B cell (primary cell): ENCODE measurements at regions of chr4 and their contacts with region 1.

Region 1: DNA sequence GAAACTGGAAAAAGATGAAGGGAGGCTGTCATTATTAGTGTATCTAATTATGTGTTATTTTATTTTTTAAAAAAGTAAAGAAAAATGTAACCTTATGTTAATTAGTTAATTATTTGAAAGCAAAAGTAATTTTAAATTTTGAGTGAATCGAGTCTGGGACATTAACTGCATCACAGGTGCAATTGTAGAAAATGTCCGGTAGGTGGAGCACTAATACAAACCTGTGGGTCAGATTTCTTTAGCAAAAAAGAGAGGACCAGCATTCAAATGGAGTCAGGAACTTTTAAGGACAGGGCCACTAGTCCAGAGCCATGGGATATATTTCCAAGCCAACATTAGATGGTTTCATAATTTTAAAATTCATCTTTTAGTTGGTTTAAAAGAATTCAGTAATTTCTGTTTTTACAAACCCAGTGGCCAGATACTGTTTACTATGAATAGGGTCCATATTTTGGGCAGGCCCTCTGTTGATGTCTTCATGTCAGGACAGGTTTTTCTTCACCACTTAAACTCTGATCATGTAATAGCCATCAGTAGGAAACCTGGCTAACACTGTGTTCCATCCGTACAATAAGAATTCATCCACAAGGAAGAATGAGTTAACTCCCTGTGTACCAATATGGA is 27.2 kb downstream of the BST1 start:
- DNase-seq: peak; percentile 62
- ATAC-seq: peak; percentile 47
- H3K4me3 ChIP-seq: no peak overlapping the region
- H3K4me3 Mint-ChIP-seq: no peak overlapping the region
- H3K27ac ChIP-seq: no peak overlapping the region
- H3K27ac Mint-ChIP-seq: no peak overlapping the region
- H3K4me1 ChIP-seq: no peaks in the 10 kb centered on the region
- H3K4me1 Mint-ChIP-seq: no peaks in the 10 kb centered on the region
- H3K27me3 ChIP-seq: no peaks in the 10 kb centered on the region
- H3K27me3 Mint-ChIP-seq: peaks cover 7% of the 10 kb centered on the region
- CTCF ChIP-seq: peak; percentile 99

Region 2: DNA sequence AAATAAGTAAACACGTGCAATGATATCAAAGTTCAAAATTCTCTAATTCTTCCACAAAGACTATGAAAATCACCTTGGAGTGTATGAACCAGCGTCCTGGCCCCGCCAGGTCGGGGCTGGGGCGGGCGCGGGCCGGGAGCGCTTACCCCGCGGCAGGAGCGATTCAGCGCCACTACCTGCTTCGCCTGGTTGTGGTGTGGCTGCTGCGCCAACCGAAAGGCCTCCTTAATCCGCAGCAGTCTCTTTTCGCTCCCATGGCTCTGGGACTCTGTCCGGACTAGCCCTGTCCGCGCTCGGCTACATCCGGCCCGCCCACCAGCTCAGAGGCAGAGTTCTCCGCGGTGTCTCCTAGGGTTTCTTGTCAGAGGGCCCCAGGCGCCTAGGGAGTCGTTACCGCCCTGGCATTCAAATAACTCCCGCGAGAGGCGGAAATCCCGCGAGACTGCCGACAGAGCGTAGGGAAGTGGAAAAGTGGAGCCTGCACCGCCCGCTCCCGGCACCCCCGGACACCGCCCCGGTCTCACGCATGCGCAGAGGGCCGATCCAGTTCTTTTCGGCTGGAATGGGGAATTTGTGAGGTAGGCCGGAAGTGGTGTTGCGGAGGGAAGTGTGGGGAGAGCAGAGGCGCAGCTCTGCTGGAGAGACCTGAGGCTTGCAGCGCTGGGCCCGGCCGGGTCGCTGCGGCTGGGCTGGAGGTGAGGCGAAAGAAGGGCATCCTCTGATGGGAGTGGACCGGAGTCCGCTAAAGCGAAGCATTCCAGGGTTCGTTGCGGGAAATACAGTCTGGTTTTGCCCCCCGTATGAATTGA is 48.6 kb before region 1 on chr4 and contains the start of gene FAM200B:
- CTCF ChIA-PET with region 1: no interaction called
- POLR2A ChIA-PET with region 1: no interaction called
- intact Hi-C with region 1: loop called (anchors 1 kb)
- DNase-seq: peak; percentile 96
- ATAC-seq: peak; percentile 98
- H3K4me3 ChIP-seq: peak within 1 kb of the TSS; percentile 83 to 99 (median 89)
- H3K4me3 Mint-ChIP-seq: peak within 1 kb of the TSS; percentile 95
- H3K27ac ChIP-seq: peak within 1 kb of the TSS; percentile 68 to 80
- H3K27ac Mint-ChIP-seq: peak within 1 kb of the TSS; percentile 89
- H3K4me1 ChIP-seq: peaks cover 8 to 16% of the 10 kb centered on the region in 2 donors
- H3K4me1 Mint-ChIP-seq: peaks cover 22% of the 10 kb centered on the region
- H3K27me3 ChIP-seq: no peaks in the 10 kb centered on the region
- H3K27me3 Mint-ChIP-seq: no peaks in the 10 kb centered on the region
- CTCF ChIP-seq: no peak
- total RNA-seq, gene FAM200B: 11.0 and 12.1 TPM in 2 replicates

Region 3: GRCh38 chr4:15719506-15719905 is 10.5 kb before region 1 on chr4:
- CTCF ChIA-PET with region 1: no interaction called
- POLR2A ChIA-PET with region 1: no interaction called
- intact Hi-C with region 1: no loop called
- DNase-seq: no peak
- ATAC-seq: no peak
- H3K4me3 ChIP-seq: no peak overlapping the region
- H3K4me3 Mint-ChIP-seq: no peak overlapping the region
- H3K27ac ChIP-seq: no peak overlapping the region
- H3K27ac Mint-ChIP-seq: no peak overlapping the region
- H3K4me1 ChIP-seq: no peaks in the 10 kb centered on the region
- H3K4me1 Mint-ChIP-seq: no peaks in the 10 kb centered on the region
- H3K27me3 ChIP-seq: no peaks in the 10 kb centered on the region
- H3K27me3 Mint-ChIP-seq: peaks cover 3% of the 10 kb centered on the region
- CTCF ChIP-seq: no peak

Region 4: DNA sequence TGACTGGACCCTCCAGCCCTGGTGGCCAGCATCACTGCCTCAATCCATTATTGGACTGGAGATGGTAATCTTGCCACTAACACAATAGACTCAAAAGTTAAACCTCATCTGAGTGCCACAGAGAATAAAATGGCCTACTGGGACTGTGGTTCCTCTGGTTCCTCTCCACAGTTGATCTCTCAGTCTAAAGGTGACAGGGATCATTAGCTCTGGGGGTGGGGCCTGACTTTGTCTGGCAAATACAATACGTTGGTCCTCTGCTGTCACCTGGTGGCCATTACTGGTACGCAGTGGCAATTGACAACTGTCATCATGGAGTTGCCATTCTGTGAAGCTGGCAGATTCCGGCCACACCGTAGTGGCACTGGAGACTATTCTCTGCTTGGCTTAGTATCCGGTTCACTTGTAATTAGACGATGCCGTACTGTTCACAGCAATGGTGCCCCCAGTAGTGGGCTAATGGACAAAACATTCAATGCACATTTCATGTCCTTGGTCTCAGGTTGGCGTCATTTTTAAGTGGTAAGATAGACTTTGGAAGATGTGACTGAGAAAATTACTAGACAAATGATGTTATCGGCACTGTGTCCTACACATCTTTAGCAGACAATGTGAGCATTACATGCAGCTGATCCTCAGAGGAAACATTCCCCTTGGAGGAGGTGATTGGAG is 226.3 kb after region 1 on chr4:
- CTCF ChIA-PET with region 1: interaction called, 17 read pairs
- POLR2A ChIA-PET with region 1: no interaction called
- intact Hi-C with region 1: loop called (anchors 1 kb)
- DNase-seq: peak; percentile 81
- ATAC-seq: peak; percentile 98
- H3K4me3 ChIP-seq: no peak overlapping the region
- H3K4me3 Mint-ChIP-seq: no peak overlapping the region
- H3K27ac ChIP-seq: no peak overlapping the region
- H3K27ac Mint-ChIP-seq: no peak overlapping the region
- H3K4me1 ChIP-seq: peaks cover 0 to 3% of the 10 kb centered on the region in 2 donors
- H3K4me1 Mint-ChIP-seq: peaks cover 9% of the 10 kb centered on the region
- H3K27me3 ChIP-seq: no peaks in the 10 kb centered on the region
- H3K27me3 Mint-ChIP-seq: peaks cover 6% of the 10 kb centered on the region
- CTCF ChIP-seq: peak; percentile 81

Region 5: DNA sequence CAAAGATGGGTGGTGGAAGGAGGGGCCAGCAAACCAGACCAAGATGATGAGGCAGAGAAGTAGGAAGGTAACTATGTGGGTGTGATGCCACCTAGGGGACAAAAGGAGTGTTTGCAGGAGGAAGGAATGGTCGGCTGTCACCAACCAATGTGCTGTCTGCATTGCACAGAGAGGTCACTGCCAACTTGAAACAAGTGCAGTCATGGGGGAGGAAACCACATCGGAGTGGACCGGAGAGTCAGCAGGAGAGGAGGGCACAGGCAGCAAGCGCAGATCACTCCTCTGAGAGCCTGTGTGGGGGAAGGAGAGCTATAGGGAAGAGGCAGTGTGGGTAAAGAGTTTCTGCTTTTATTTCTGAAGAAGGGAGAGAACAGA is 271.4 kb after region 1 on chr4:
- CTCF ChIA-PET with region 1: interaction called, 10 read pairs
- POLR2A ChIA-PET with region 1: no interaction called
- intact Hi-C with region 1: no loop called
- DNase-seq: peak; percentile 68
- ATAC-seq: peak; percentile 81
- H3K4me3 ChIP-seq: no peak overlapping the region
- H3K4me3 Mint-ChIP-seq: no peak overlapping the region
- H3K27ac ChIP-seq: no peak overlapping the region
- H3K27ac Mint-ChIP-seq: no peak overlapping the region
- H3K4me1 ChIP-seq: no peaks in the 10 kb centered on the region
- H3K4me1 Mint-ChIP-seq: no peaks in the 10 kb centered on the region
- H3K27me3 ChIP-seq: no peaks in the 10 kb centered on the region
- H3K27me3 Mint-ChIP-seq: no peaks in the 10 kb centered on the region
- CTCF ChIP-seq: peak; percentile 82